Heart left ventricle (tissue), 16 donors: ENCODE measurements at regions of chr1 and their contacts with region 1.

Region 1: GRCh38 chr1:168609133-168609715 is 32.8 kb downstream of the XCL1 start:
- DNase-seq: peak; percentile 49 to 64 (median 64)
- ATAC-seq: peak; percentile 37 to 66 (median 64)
- H3K4me3 ChIP-seq: peak overlapping the region in 3 of 12 donors; percentile 5 to 19 (median 14)
- H3K27ac ChIP-seq: peak overlapping the region in 8 of 12 donors; percentile 29 to 64 (median 42)
- H3K4me1 ChIP-seq: peaks cover 0 to 36% (median 16%) of the 10 kb centered on the region in 12 donors
- H3K27me3 ChIP-seq: no peaks in the 10 kb centered on the region
- CTCF ChIP-seq: no peak
- POLR2A ChIP-seq: no peak

Region 2: DNA sequence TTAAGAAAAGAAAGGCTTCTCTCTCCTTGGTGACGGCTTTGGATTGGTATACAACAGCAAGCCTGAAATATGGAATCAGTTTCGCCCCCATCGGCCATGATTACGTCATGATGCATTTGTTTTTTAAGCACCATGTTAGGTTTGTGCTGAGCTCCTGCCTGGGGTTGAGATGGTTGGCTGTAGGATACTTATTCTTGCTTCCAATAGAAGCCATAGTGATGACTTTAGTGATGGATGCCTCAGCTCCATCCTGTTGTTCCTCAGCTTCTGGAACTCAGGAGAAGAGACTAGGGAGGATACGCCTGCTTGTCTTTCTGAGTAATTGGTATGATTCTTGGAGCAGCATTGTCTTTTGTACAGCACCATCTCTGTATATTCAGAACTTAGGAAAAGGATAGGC is 18.2 kb before region 1 on chr1:
- intact Hi-C with region 1: no loop called
- DNase-seq: no peak
- ATAC-seq: no peak
- H3K4me3 ChIP-seq: no peak overlapping the region
- H3K27ac ChIP-seq: no peak overlapping the region
- H3K4me1 ChIP-seq: no peaks in the 10 kb centered on the region
- H3K27me3 ChIP-seq: no peaks in the 10 kb centered on the region
- CTCF ChIP-seq: no peak
- POLR2A ChIP-seq: no peak

Region 3: GRCh38 chr1:169115891-169116585 is 506.8 kb after region 1 on chr1:
- intact Hi-C with region 1: loop called in 1 of 10 experiments (anchors 10 kb)
- DNase-seq: peak in 4 of 5 donors; percentile 58 to 80 (median 70)
- ATAC-seq: peak; percentile 44 to 81 (median 77)
- H3K4me3 ChIP-seq: peak overlapping the region in 2 of 12 donors; percentile 6 to 19
- H3K27ac ChIP-seq: peak overlapping the region in 11 of 12 donors; percentile 54 to 97 (median 76)
- H3K4me1 ChIP-seq: peaks cover 0 to 94% (median 46%) of the 10 kb centered on the region in 12 donors
- H3K27me3 ChIP-seq: no peaks in the 10 kb centered on the region
- CTCF ChIP-seq: no peak
- POLR2A ChIP-seq: no peak

Region 4: DNA sequence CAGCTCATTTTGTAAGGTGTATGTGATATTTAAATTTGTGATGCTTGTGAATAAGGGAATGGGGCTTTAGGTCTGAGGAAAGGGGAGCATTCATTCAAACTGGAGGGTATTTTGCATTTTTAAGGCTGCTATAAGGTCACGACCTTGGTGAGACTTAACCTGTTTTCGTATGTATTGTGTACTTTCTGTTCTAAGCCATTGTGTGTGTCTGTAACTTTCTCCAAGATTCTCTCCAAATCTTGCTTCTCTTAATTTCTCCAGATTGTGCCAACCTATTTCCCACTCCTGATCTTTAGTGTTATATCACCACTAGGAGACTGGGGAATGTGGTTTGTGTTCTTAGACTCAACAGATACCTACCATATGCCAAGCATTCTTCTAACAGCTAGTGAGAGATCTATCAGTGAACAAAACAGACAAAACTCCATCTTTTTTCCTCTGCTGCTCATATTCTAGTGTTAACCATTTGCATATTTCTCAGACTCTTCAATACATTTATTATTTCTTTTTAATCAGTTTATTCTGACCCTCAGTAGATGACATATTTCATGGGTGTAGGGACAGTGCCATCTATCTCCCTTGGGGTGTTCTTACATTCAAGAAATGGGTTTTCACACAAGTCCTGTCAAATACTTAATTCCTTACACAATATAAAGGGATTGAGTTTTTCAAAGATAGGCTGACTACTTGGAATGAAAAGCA is 524.7 kb after region 1 on chr1:
- intact Hi-C with region 1: loop called in 1 of 10 experiments (anchors 5 kb)
- DNase-seq: no peak
- ATAC-seq: peak in 2 of 4 donors; percentile 40 to 47
- H3K4me3 ChIP-seq: no peak overlapping the region
- H3K27ac ChIP-seq: peak overlapping the region in 5 of 12 donors; percentile 10 to 34 (median 15)
- H3K4me1 ChIP-seq: peaks cover 0 to 23% (median 8%) of the 10 kb centered on the region in 12 donors
- H3K27me3 ChIP-seq: no peaks in the 10 kb centered on the region
- CTCF ChIP-seq: peak in 9 of 12 donors; percentile 10 to 64 (median 42)
- POLR2A ChIP-seq: no peak